Activated CD4-positive, alpha-beta memory T cell treated with anti-CD3 and anti-CD28 coated beads, Interleukin-2, amount 10 ng/mL, durations not matched to agents 7 days and 5 days (primary cell): ENCODE measurements at regions of chr22 and their contacts with region 1.

Region 1: GRCh38 chr22:22787786-22788459 is 99.7 kb upstream of the IGLL5 start:
- DNase-seq: peak; percentile 75
- H3K4me3 Mint-ChIP-seq: no peak overlapping the region
- H3K27ac Mint-ChIP-seq: peak overlapping the region; percentile 62
- H3K4me1 Mint-ChIP-seq: peaks cover 41% of the 10 kb centered on the region
- H3K27me3 Mint-ChIP-seq: peaks cover 14% of the 10 kb centered on the region

Region 2: DNA sequence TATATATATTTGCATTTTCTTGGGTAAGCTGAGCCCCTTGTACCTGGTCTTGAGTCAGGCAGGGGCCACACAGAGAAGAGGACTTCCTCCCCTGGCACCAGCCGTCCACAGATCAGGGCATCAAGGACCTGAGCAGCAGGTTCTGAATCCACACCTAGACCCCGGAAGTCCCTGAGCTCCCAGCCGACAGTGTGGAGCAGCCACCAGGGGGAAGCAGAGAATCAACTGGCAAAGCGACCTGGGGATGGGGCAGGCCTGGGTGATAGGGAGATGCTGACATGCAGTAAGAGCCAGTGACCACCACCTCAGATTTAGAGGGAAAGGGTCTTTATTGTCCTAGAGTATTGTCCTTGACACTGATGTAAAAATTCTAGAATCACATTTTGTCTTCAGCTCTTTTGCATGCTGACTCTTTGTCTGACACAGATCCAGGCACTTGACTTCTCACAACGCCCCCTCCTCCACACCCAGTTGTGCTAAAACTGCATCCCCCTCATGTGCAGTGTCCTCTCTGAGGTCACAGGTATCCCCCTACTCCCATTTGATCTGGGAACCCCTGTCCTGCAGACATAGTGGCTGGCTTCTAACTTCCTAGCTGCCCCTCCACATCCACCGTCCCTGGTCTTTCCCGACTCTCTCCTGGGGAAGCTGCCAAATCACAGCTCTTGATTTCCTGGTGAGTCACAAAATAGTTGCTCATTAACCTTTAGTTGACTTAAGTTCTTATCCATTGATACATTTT is 34.2 kb before region 1 on chr22:
- CTCF ChIA-PET with region 1: interaction called, 12 read pairs
- POLR2A ChIA-PET with region 1: no interaction called
- DNase-seq: peak; percentile 83
- H3K4me3 Mint-ChIP-seq: no peak overlapping the region
- H3K27ac Mint-ChIP-seq: no peak overlapping the region
- H3K4me1 Mint-ChIP-seq: peaks cover 6% of the 10 kb centered on the region
- H3K27me3 Mint-ChIP-seq: no peaks in the 10 kb centered on the region

Region 3: DNA sequence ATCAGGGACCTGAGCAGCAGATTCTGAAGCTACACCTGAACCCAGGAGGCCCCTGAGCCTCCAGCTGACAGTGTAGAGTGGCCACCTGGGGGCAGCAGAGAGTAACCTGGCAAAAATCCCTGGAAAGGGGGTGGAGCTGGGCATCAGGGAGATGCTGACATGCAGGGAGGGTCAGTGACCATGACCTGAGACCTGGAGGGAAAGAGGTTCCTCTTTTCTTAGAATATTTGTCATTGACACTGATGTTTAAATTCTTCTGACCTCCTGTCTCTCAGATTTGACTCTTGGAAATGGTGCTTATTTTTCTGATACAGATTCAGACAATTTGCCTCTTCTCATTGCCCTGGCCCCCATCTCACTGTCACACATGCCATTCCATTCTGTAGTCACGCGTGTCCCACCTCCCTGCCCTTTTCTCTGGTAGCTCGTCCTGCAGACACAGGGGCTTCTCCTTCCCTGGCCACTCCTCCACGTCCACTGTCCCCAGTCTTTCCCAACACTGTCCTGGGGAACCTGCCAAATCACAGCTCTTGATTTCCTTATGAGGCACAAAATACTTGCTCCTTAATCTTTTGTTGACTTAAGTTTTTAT is 17.5 kb before region 1 on chr22:
- CTCF ChIA-PET with region 1: interaction called, 25 read pairs
- POLR2A ChIA-PET with region 1: no interaction called
- DNase-seq: peak; percentile 50
- H3K4me3 Mint-ChIP-seq: no peak overlapping the region
- H3K27ac Mint-ChIP-seq: no peak overlapping the region
- H3K4me1 Mint-ChIP-seq: no peaks in the 10 kb centered on the region
- H3K27me3 Mint-ChIP-seq: peaks cover 9% of the 10 kb centered on the region

Region 4: GRCh38 chr22:22802339-22802970 is 14.5 kb after region 1 on chr22:
- CTCF ChIA-PET with region 1: interaction called, 22 read pairs
- POLR2A ChIA-PET with region 1: no interaction called
- DNase-seq: peak; percentile 55
- H3K4me3 Mint-ChIP-seq: no peak overlapping the region
- H3K27ac Mint-ChIP-seq: no peak overlapping the region
- H3K4me1 Mint-ChIP-seq: peaks cover 4% of the 10 kb centered on the region
- H3K27me3 Mint-ChIP-seq: peaks cover 13% of the 10 kb centered on the region

Region 5: GRCh38 chr22:22810018-22810427 is 22.1 kb after region 1 on chr22:
- CTCF ChIA-PET with region 1: interaction called, 10 read pairs
- POLR2A ChIA-PET with region 1: interaction called, 3 read pairs
- DNase-seq: peak; percentile 82
- H3K4me3 Mint-ChIP-seq: no peak overlapping the region
- H3K27ac Mint-ChIP-seq: no peak overlapping the region
- H3K4me1 Mint-ChIP-seq: peaks cover 8% of the 10 kb centered on the region
- H3K27me3 Mint-ChIP-seq: peaks cover 29% of the 10 kb centered on the region

Region 6: GRCh38 chr22:22818861-22819855 is 31.2 kb after region 1 on chr22:
- CTCF ChIA-PET with region 1: interaction called, 6 read pairs
- POLR2A ChIA-PET with region 1: interaction called, 19 read pairs
- DNase-seq: peak; percentile 76
- H3K4me3 Mint-ChIP-seq: peak overlapping the region; percentile 72
- H3K27ac Mint-ChIP-seq: peak overlapping the region; percentile 96
- H3K4me1 Mint-ChIP-seq: peaks cover 87% of the 10 kb centered on the region
- H3K27me3 Mint-ChIP-seq: no peaks in the 10 kb centered on the region

Region 7: GRCh38 chr22:22910361-22911240 is 122.7 kb after region 1 on chr22:
- CTCF ChIA-PET with region 1: no interaction called
- POLR2A ChIA-PET with region 1: no interaction called
- DNase-seq: no peak
- H3K4me3 Mint-ChIP-seq: no peak overlapping the region
- H3K27ac Mint-ChIP-seq: no peak overlapping the region
- H3K4me1 Mint-ChIP-seq: peaks cover 9% of the 10 kb centered on the region
- H3K27me3 Mint-ChIP-seq: peaks cover 37% of the 10 kb centered on the region